ENCODE measurements at regions of chr10 and their contacts with region 1.

Region 1: GRCh38 chr10:80205478-80206276 is at the start of gene ANXA11:
- DNase-seq: peak; percentile 81 to 89 (median 86)
- H3K4me3 ChIP-seq: peak within 1 kb of the TSS; percentile 90
- H3K27ac ChIP-seq: peak within 1 kb of the TSS; percentile 86 to 93
- H3K4me1 ChIP-seq: peaks cover 23% of the 10 kb centered on the region
- H3K27me3 ChIP-seq: no peaks in the 10 kb centered on the region
- CTCF ChIP-seq: no peak
- EP300 ChIP-seq: no peak
- POLR2A ChIP-seq: peak; percentile 74
- total RNA-seq, gene ANXA11: 44.2 to 159 (median 137) TPM

Region 2: GRCh38 chr10:80144067-80144695 is 61.5 kb before region 1 on chr10:
- intact Hi-C with region 1: loop called in 1 of 4 experiments (anchors 5 kb)
- DNase-seq: peak in 3 of 5 donors; percentile 43 to 52 (median 44)
- H3K4me3 ChIP-seq: no peak overlapping the region
- H3K27ac ChIP-seq: no peak overlapping the region
- H3K4me1 ChIP-seq: peaks cover 8% of the 10 kb centered on the region
- H3K27me3 ChIP-seq: no peaks in the 10 kb centered on the region
- CTCF ChIP-seq: peak in 1 of 3 donors; percentile 1
- EP300 ChIP-seq: no peak
- POLR2A ChIP-seq: no peak

Region 3: GRCh38 chr10:80158598-80159127 is 47.0 kb before region 1 on chr10:
- intact Hi-C with region 1: loop called (anchors 5 kb)
- DNase-seq: peak; percentile 69 to 87 (median 77)
- H3K4me3 ChIP-seq: no peak overlapping the region
- H3K27ac ChIP-seq: peak overlapping the region; percentile 16 to 41
- H3K4me1 ChIP-seq: peaks cover 11% of the 10 kb centered on the region
- H3K27me3 ChIP-seq: no peaks in the 10 kb centered on the region
- CTCF ChIP-seq: no peak
- EP300 ChIP-seq: no peak
- POLR2A ChIP-seq: no peak

Region 4: GRCh38 chr10:80280973-80281691 is 75.5 kb after region 1 on chr10:
- intact Hi-C with region 1: no loop called
- DNase-seq: no peak
- H3K4me3 ChIP-seq: no peak overlapping the region
- H3K27ac ChIP-seq: peak overlapping the region in 1 of 2 donors; percentile 19
- H3K4me1 ChIP-seq: peaks cover 7% of the 10 kb centered on the region
- H3K27me3 ChIP-seq: no peaks in the 10 kb centered on the region
- CTCF ChIP-seq: no peak
- EP300 ChIP-seq: no peak
- POLR2A ChIP-seq: no peak

Region 5: DNA sequence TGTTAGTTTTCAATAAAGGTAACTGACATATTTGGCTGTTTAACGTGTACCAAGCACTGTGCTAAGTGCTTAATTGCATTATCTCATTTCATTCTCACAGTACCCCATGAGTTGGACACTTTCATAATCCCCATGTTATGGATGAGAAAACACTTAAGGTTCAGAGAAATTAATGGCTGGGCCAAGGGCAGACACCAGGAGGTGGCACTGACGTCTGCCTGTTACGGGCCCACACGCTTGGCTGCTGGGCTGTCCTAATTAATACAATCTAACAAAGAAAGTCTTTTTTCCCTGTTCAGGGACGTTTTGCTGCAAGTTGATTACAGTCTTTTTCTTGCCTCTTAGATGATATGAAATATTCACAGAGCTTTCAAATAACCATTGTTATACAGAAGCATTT is 167.0 kb after region 1 on chr10:
- intact Hi-C with region 1: no loop called
- DNase-seq: no peak
- H3K4me3 ChIP-seq: no peak overlapping the region
- H3K27ac ChIP-seq: no peak overlapping the region
- H3K4me1 ChIP-seq: no peaks in the 10 kb centered on the region
- H3K27me3 ChIP-seq: no peaks in the 10 kb centered on the region
- CTCF ChIP-seq: no peak
- EP300 ChIP-seq: no peak
- POLR2A ChIP-seq: no peak